ENCODE measurements at regions of chr10 and their contacts with region 1.

Region 1: GRCh38 chr10:22988581-22989360 is 60.9 kb downstream of the ARMC3 start:
- DNase-seq: peak; percentile 73
- ATAC-seq: peak; percentile 68
- H3K4me3 Mint-ChIP-seq: no peak overlapping the region
- H3K27ac Mint-ChIP-seq: no peak overlapping the region
- H3K4me1 Mint-ChIP-seq: peaks cover 15% of the 10 kb centered on the region
- H3K27me3 Mint-ChIP-seq: peaks cover 5% of the 10 kb centered on the region

Region 2: GRCh38 chr10:22010973-22011408 is 977.8 kb before region 1 on chr10:
- CTCF ChIA-PET with region 1: interaction called, 7 read pairs
- POLR2A ChIA-PET with region 1: no interaction called
- intact Hi-C with region 1: loop called in 1 of 2 experiments (anchors 1 kb)
- DNase-seq: no peak
- ATAC-seq: no peak
- H3K4me3 Mint-ChIP-seq: no peak overlapping the region
- H3K27ac Mint-ChIP-seq: no peak overlapping the region
- H3K4me1 Mint-ChIP-seq: peaks cover 3% of the 10 kb centered on the region
- H3K27me3 Mint-ChIP-seq: no peaks in the 10 kb centered on the region

Region 3: GRCh38 chr10:22316285-22317120 is 672.3 kb before region 1 on chr10 and contains the start of gene COMMD3:
- CTCF ChIA-PET with region 1: no interaction called
- POLR2A ChIA-PET with region 1: no interaction called
- intact Hi-C with region 1: loop called in 1 of 2 experiments (anchors 5 kb)
- DNase-seq: peak; percentile 88
- ATAC-seq: peak; percentile 72
- H3K4me3 Mint-ChIP-seq: peak within 1 kb of the TSS; percentile 94
- H3K27ac Mint-ChIP-seq: peak within 1 kb of the TSS; percentile 97
- H3K4me1 Mint-ChIP-seq: peaks cover 38% of the 10 kb centered on the region
- H3K27me3 Mint-ChIP-seq: peaks cover 7% of the 10 kb centered on the region
- total RNA-seq, gene COMMD3: 53.8 to 77.1 TPM

Region 4: GRCh38 chr10:22573820-22574569 is 414.8 kb before region 1 on chr10:
- CTCF ChIA-PET with region 1: interaction called, 6 read pairs
- POLR2A ChIA-PET with region 1: no interaction called
- intact Hi-C with region 1: loop called (anchors 1 to 2 kb)
- DNase-seq: peak; percentile 37
- ATAC-seq: no peak
- H3K4me3 Mint-ChIP-seq: no peak overlapping the region
- H3K27ac Mint-ChIP-seq: no peak overlapping the region
- H3K4me1 Mint-ChIP-seq: peaks cover 46% of the 10 kb centered on the region
- H3K27me3 Mint-ChIP-seq: no peaks in the 10 kb centered on the region

Region 5: DNA sequence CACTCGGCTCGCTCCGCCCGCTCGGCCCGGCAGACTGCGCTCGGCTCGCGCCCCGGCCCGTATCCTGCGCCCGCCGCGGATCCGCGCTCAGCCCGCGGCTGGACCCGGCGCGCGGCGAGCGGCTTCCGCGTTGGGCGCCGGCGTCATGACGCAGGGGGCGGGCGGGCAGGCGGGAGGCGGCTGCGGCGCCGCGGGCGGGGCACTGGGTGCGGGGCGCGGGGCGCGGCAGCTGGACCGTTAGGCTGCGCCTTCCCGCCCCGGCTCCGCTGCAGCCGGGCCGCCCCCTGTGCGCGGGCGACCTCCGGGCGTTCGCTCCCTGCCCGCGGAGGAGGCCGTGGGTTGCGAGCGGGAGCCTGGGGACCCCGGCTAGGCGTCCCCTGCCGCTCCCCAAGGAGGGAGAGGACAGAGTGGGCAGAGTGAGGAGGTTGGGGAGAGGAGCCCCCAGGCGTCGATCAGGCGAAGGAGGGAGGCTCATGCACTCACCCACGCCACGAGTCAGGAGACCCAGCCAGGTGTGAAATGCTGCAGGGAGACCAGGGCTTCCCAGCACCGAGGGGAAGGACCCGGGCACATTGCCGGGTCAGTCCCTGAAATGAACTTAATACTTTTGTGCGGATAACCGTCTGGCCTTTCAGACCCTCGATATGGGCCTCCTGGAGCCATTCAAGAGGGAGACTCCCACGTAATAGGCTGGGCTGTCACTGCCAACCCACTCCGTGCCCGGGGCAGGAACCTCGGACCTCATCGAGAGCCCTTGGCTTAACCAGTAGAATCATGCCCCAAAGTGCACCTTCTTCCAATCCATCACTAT is 274.1 kb before region 1 on chr10 and contains the start of gene PIP4K2A:
- CTCF ChIA-PET with region 1: no interaction called
- POLR2A ChIA-PET with region 1: no interaction called
- intact Hi-C with region 1: loop called in 1 of 2 experiments (anchors 10 kb)
- DNase-seq: peak; percentile 86
- ATAC-seq: peak; percentile 86
- H3K4me3 Mint-ChIP-seq: peak within 1 kb of the TSS; percentile 86
- H3K27ac Mint-ChIP-seq: peak within 1 kb of the TSS; percentile 88
- H3K4me1 Mint-ChIP-seq: peaks cover 29% of the 10 kb centered on the region
- H3K27me3 Mint-ChIP-seq: no peaks in the 10 kb centered on the region
- total RNA-seq, gene PIP4K2A: 105 to 108 TPM

Region 6: DNA sequence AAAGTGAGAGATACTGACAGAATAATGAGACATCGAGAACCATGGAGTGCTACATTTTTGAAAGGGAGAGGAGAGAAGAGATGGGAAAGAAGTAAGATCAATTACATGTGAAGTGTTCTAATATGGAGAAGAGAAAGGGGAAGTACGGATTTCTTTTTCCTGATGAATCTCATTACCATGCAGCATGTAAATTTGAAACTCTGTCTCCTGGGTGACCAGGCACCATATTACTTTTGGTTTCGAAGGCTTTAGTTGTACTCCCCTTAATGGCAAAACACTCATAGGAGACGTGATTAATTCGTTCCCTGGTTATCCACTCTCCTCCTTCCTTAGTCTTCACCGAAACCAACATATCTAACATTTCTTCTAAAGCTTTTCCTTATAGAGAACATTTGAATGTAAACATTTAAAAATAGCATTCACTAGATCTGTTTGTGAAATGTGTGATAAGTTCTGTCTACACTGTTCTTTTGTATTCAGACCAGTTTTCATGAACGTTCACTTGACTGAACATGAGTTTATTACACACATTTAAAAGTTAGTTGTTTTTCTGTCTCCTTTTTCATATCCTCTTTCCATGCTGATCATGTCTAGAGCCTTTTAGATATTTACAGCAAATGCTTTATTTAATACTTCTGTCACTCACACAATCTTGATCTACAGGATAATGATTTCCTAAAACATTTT is 26.4 kb after region 1 on chr10:
- CTCF ChIA-PET with region 1: no interaction called
- POLR2A ChIA-PET with region 1: no interaction called
- intact Hi-C with region 1: no loop called
- DNase-seq: no peak
- ATAC-seq: no peak
- H3K4me3 Mint-ChIP-seq: no peak overlapping the region
- H3K27ac Mint-ChIP-seq: no peak overlapping the region
- H3K4me1 Mint-ChIP-seq: no peaks in the 10 kb centered on the region
- H3K27me3 Mint-ChIP-seq: peaks cover 21% of the 10 kb centered on the region